ENCODE measurements at regions of chr20 and their contacts with region 1.

Region 1: DNA sequence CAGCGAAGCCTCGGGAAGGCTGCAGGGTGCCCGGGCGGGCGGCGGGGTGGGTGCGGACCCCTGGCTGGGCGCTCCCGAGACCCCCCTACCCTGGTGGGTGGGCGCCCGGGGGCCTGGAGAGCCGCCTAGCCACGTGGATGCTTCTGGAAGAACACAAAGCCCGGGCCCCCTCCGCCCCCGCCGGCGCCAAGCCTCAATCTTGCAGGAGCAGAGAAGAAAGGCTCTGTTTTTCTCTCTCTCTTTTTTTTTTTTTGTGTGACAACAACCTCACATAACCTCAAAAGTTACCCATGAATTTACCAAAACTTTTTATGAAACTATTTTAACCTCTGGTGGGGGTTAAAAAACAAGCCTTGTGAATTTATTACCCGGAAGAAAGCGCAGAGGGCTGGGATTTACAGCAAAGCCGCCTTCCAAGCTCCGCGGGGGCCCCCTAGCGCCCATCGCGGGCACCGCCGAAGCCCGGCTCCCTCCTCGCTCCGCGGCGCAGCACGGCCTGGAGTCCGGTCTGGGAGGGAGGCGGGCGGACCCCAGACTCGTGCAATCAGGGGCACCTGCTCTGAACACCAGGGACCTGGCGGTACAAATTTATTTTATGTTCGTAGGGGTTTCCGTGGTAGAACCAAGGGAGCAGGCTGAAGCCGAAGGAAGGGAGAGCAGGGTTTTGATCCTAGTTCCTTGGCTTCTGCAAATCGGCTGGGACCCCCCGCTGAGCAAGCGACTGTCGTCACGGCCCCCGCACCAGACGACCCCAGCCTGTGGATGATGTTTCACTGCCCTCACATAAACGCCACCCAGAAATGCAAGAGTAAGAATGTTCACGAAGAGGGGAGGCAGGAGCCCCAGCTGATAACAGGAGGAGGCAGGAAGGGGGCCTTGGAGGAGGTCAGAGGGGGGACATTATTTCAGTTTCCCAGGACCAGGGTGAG is 58.9 kb downstream of the ZNF831 start:
- DNase-seq: peak; percentile 92
- H3K4me3 ChIP-seq: peak overlapping the region; percentile 47 to 55
- H3K27ac ChIP-seq: peak overlapping the region in 1 of 2 experiments; percentile 64; a peak in 1 of 4 replicates
- H3K4me1 ChIP-seq: peaks cover 0 to 23% of the 10 kb centered on the region in 2 experiments; a peak in 2 of 4 replicates
- H3K27me3 ChIP-seq: peaks cover 7% of the 10 kb centered on the region; the same call in 1 of the 2 replicates
- CTCF ChIP-seq: peak; percentile 97
- EP300 ChIP-seq: 0 out of 4 replicates have a peak, but pooled peaks of 1 of the 2 experiments have one; percentile 7
- RAD21 ChIP-seq: peak; percentile 90

Region 2: GRCh38 chr20:58864350-58864749 is 358.2 kb before region 1 on chr20:
- CTCF ChIA-PET with region 1: interaction called, 48 read pairs
- POLR2A ChIA-PET with region 1: no interaction called
- DNase-seq: peak; percentile 49
- H3K4me3 ChIP-seq: no peak overlapping the region
- H3K27ac ChIP-seq: no peak overlapping the region
- H3K4me1 ChIP-seq: no peaks in the 10 kb centered on the region
- H3K27me3 ChIP-seq: no peaks in the 10 kb centered on the region
- CTCF ChIP-seq: peak; percentile 27
- EP300 ChIP-seq: no peak
- RAD21 ChIP-seq: peak; percentile 77

Region 3: GRCh38 chr20:59032023-59032712 is 190.3 kb before region 1 on chr20 and contains the start of gene ATP5F1E:
- CTCF ChIA-PET with region 1: interaction called, 17 read pairs
- POLR2A ChIA-PET with region 1: interaction called, 5 read pairs
- DNase-seq: peak; percentile 99
- H3K4me3 ChIP-seq: peak within 1 kb of the TSS; percentile 78 to 91
- H3K27ac ChIP-seq: peak within 1 kb of the TSS; percentile 82 to 91
- H3K4me1 ChIP-seq: peaks cover 30 to 41% of the 10 kb centered on the region in 2 experiments; a peak in 3 of 4 replicates
- H3K27me3 ChIP-seq: no peaks in the 10 kb centered on the region
- CTCF ChIP-seq: no peak
- EP300 ChIP-seq: 0 out of 4 replicates have a peak, but pooled peaks of 1 of the 2 experiments have one; percentile 1
- RAD21 ChIP-seq: peak; percentile 1; the same call in 1 of the 2 replicates
- polyA plus RNA-seq, gene ATP5F1E: 48.0 and 60.8 TPM in 2 replicates

Region 4: DNA sequence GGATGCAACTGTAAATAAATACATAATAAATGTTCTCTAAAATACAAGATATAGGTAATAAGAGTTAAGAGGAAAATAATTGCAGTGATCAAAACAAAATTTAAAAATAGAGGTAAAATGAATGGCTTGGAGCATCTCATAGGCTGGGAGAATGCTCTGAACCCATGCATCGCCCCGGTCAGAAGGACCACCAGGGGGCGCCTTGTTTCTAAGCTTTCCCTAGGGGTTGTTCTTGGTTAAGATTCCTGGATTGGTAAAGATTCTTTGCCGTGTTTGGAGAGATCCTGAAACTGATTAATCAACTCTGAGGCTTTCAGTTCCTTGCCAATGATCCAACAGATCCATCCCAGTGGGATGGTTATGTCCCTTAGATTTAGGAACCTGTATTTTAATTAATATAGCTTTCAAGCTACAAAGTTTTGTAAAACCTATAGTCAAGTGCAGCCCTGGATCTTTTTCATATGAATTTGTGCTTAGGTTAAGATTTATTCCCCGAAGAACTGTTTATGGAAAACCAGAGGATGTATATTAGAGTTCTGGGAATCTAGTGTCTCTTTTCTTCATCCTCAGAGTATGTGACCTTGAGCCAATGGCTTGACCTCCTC is 134.6 kb before region 1 on chr20:
- CTCF ChIA-PET with region 1: interaction called, 26 read pairs
- POLR2A ChIA-PET with region 1: no interaction called
- DNase-seq: peak; percentile 55
- H3K4me3 ChIP-seq: peak overlapping the region in 1 of 2 experiments; percentile 39; a peak in 1 of 4 replicates
- H3K27ac ChIP-seq: no peak overlapping the region
- H3K4me1 ChIP-seq: peaks cover 0 to 3% of the 10 kb centered on the region in 2 experiments; a peak in 2 of 4 replicates
- H3K27me3 ChIP-seq: no peaks in the 10 kb centered on the region
- CTCF ChIP-seq: peak; percentile 90
- EP300 ChIP-seq: no peak
- RAD21 ChIP-seq: peak; percentile 71

Region 5: GRCh38 chr20:59253779-59254319 is 31.3 kb after region 1 on chr20:
- CTCF ChIA-PET with region 1: interaction called, 11 read pairs
- POLR2A ChIA-PET with region 1: no interaction called
- DNase-seq: peak; percentile 13
- H3K4me3 ChIP-seq: no peak overlapping the region
- H3K27ac ChIP-seq: no peak overlapping the region
- H3K4me1 ChIP-seq: peaks cover 0 to 6% of the 10 kb centered on the region in 2 experiments; a peak in 1 of 4 replicates
- H3K27me3 ChIP-seq: no peaks in the 10 kb centered on the region; the same call in 1 of the 2 replicates
- CTCF ChIP-seq: no peak
- EP300 ChIP-seq: no peak
- RAD21 ChIP-seq: peak; percentile 18; the same call in 1 of the 2 replicates

Region 6: DNA sequence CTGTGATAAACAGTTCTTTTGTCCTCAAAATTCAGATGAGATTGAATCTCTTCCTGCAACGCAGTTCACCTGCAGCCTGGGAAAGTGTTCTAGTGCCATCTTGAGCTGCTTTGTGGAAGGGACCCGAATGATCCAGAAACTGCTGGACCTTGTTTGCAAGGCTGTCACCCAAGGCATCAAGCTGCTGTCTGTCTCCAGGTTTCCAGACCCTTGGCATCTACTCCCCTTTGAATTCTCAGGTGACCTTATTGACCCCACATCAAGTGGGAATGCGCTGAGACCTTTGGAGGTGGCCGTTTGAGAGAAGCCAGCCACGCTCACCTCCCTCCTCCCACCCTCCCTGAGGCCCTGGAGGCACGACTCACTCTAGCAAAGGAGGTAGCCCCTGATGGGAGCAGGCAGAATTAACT is 190.4 kb after region 1 on chr20:
- CTCF ChIA-PET with region 1: interaction called, 106 read pairs
- POLR2A ChIA-PET with region 1: no interaction called
- DNase-seq: peak; percentile 46
- H3K4me3 ChIP-seq: no peak overlapping the region
- H3K27ac ChIP-seq: peak overlapping the region in 1 of 2 experiments; percentile 80; a peak in 2 of 4 replicates
- H3K4me1 ChIP-seq: peaks cover 0 to 27% of the 10 kb centered on the region in 2 experiments; a peak in 1 of 4 replicates
- H3K27me3 ChIP-seq: 0 out of 2 replicates have a peak, but pooled peaks cover 7% of the 10 kb centered on the region
- CTCF ChIP-seq: no peak
- EP300 ChIP-seq: no peak
- RAD21 ChIP-seq: peak; percentile 64